Ascending aorta (tissue), 2 donors: ENCODE measurements at regions of chr7 and their contacts with region 1.

Region 1: DNA sequence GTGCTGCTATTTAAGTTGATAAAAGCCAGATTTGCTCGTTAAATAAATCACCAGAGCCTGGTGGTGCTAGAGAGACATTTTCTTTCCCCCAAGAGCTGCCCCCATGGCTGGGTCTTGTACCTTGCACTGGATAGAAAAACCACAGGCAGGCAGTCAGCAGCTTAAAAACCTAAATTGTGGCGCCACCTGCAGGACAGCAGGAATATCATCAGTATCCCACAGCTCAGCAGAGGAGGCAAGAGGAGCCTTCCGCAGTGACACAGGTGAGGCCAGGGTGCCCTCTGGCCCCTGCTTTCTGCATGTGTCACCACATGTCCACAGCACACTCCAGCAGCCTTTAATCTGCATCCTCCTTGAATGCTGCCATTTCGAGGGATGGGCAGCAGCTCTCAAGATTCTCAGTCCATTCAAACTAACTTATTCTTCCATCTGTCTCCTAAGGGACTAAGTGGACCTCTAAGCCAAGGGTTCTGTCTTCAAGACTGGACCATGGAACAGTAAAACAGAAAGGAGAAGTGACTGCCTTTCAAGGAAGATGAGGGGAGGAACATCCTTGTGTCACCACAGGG is 4.5 kb upstream of the PLXNA4 start:
- DNase-seq: peak in 1 of 2 donors; percentile 82
- H3K4me3 ChIP-seq: no peak overlapping the region
- H3K27ac ChIP-seq: no peak overlapping the region
- H3K4me1 ChIP-seq: peaks cover 0 to 9% of the 10 kb centered on the region in 2 donors
- H3K27me3 ChIP-seq: no peaks in the 10 kb centered on the region
- CTCF ChIP-seq: peak; percentile 73 to 79 (median 74)

Region 2: DNA sequence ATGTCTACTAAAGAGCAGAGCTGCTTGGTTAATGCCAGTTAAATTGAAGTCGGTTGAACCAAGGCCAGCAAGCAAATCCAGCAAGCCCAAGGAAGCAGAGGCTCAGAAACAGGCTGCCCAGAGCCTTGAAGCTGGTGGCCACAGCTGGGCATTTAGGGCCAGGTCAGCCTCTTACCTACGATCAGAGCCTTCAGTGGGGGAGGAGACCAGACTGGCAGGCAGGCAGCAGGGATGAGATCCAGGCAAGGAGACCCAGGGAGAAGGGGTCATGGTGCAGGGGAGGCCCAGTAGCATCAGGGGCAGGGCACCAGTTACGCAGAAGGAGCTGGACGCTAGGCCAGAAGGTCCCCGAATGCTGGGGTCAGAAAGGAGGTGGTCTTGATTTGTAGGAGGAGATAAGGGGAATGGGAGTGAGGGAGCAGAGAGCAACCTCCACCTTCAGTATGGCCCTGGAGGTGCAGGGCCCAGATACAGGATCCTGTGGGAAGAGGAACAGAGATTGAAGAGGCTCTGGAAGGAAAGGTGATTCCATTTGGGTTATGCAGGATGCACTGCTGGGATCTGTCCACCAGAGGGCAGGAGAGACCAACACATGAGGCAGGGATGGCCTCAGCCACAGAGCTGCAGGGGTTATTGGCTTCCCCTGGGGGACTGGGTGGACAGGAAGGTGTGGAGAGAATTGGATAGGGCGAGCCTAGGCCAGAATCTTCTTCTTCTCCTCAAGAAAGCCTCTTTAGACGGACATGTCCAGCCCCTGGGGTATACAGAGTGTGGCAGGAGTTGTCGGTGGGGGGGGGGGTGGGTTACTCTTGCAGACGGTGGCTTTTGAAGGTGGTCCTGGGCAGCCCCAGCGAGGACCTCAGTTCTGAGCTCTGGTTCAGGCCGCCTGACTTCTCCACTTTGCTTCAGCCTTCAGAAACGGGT is 891.8 kb before region 1 on chr7:
- intact Hi-C with region 1: loop called (anchors 2 kb)
- DNase-seq: no peak
- H3K4me3 ChIP-seq: no peak overlapping the region
- H3K27ac ChIP-seq: no peak overlapping the region
- H3K4me1 ChIP-seq: no peaks in the 10 kb centered on the region
- H3K27me3 ChIP-seq: no peaks in the 10 kb centered on the region
- CTCF ChIP-seq: peak; percentile 77 to 91 (median 87)

Region 3: GRCh38 chr7:131945313-131945911 is 635.4 kb before region 1 on chr7:
- intact Hi-C with region 1: loop called (anchors 2 kb)
- DNase-seq: peak in 1 of 2 donors; percentile 81
- H3K4me3 ChIP-seq: peak overlapping the region; percentile 46 to 54
- H3K27ac ChIP-seq: no peak overlapping the region
- H3K4me1 ChIP-seq: peaks cover 16 to 32% of the 10 kb centered on the region in 2 donors
- H3K27me3 ChIP-seq: no peaks in the 10 kb centered on the region
- CTCF ChIP-seq: peak; percentile 82 to 99 (median 95)

Region 4: GRCh38 chr7:132318352-132319318 is 262.2 kb before region 1 on chr7:
- intact Hi-C with region 1: loop called (anchors 1 kb)
- DNase-seq: peak; percentile 21 to 89
- H3K4me3 ChIP-seq: no peak overlapping the region
- H3K27ac ChIP-seq: no peak overlapping the region
- H3K4me1 ChIP-seq: peaks cover 0 to 7% of the 10 kb centered on the region in 2 donors
- H3K27me3 ChIP-seq: no peaks in the 10 kb centered on the region
- CTCF ChIP-seq: peak; percentile 82 to 92 (median 88)

Region 5: DNA sequence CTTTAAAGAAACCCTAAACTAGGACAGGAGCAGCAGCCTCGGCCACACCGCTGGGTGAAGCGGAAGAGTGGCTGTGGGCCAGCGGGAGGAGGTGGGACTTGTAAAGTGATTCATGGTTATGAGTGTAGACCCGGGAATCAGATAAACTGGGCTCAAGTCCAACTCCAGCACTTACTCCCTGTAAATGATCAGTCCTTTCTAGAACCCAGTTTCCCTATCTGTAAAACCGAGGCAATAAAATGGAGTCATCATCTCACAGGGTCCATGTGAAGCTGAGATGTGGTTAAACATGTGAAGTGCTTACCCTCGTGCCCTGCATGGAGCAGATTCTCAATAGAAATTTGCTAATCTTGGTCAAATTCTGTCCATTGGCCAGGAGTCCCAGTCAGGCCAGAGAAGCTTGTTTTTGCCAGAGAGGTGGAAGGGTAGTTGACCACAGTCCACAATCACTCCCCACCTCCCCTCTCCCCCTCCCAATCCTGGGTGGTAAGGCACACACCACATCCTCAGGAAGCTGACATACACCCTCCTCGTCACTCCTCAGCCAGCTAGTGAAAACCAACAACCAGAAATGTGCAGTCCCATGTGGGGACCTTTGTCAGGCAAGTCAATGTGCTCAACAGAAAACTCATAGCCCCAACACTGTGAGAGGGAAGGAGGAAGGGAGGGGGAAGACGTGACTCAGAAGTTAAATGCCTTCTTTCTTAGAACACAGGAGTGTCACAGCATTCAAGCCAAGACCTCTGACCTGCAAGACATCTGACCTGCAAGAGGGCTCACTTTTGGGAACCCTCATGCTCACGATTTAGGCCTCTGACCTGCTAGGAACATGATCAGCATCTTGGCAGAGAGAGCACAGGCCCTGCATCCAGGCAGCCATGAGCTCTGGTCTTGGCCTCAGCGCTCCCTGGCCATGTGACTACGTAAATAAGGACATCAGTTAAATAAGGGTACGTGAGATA is 149.7 kb before region 1 on chr7:
- intact Hi-C with region 1: loop called (anchors 10 kb)
- DNase-seq: peak; percentile 24 to 89
- H3K4me3 ChIP-seq: no peak overlapping the region
- H3K27ac ChIP-seq: peak overlapping the region; percentile 51 to 69
- H3K4me1 ChIP-seq: peaks cover 0 to 45% of the 10 kb centered on the region in 2 donors
- H3K27me3 ChIP-seq: no peaks in the 10 kb centered on the region
- CTCF ChIP-seq: no peak

Region 6: GRCh38 chr7:132614428-132615318 is 33.9 kb after region 1 on chr7:
- intact Hi-C with region 1: no loop called
- DNase-seq: peak in 1 of 2 donors; percentile 64
- H3K4me3 ChIP-seq: peak overlapping the region; percentile 40 to 42
- H3K27ac ChIP-seq: no peak overlapping the region
- H3K4me1 ChIP-seq: no peaks in the 10 kb centered on the region
- H3K27me3 ChIP-seq: no peaks in the 10 kb centered on the region
- CTCF ChIP-seq: no peak